Transverse colon (tissue), 4 donors: ENCODE measurements at regions of chr4 and their contacts with region 1.

Region 1: GRCh38 chr4:116202524-116202923 is 882.9 kb downstream of the TRAM1L1 start:
- DNase-seq: no peak
- H3K4me3 ChIP-seq: no peak overlapping the region
- H3K27ac ChIP-seq: no peak overlapping the region
- H3K4me1 ChIP-seq: no peaks in the 10 kb centered on the region
- H3K27me3 ChIP-seq: no peaks in the 10 kb centered on the region
- CTCF ChIP-seq: no peak
- EP300 ChIP-seq: no peak
- POLR2A ChIP-seq: no peak

Region 2: DNA sequence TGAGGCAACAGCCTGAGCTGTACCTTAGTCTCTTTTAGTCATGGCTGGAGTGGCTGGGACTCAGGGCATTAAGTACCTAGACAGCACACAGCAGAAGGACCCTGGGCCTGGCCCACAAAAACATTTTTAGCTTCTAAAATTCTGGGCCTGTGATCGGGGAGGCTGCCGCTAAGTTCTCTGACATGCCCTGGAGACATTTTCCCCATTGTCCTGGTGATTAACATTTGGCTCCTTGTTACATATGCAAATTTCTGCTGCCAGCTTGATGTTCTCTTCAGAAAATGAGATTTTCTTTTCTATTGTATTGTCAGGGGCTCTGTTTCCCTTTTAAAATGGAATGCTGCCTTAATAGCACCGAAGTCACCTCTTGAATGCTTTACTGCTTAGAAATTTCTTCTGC is 69.6 kb before region 1 on chr4:
- in situ Hi-C with region 1: no loop called
- intact Hi-C with region 1: no loop called
- DNase-seq: no peak
- H3K4me3 ChIP-seq: no peak overlapping the region
- H3K27ac ChIP-seq: no peak overlapping the region
- H3K4me1 ChIP-seq: no peaks in the 10 kb centered on the region
- H3K27me3 ChIP-seq: no peaks in the 10 kb centered on the region
- CTCF ChIP-seq: no peak
- EP300 ChIP-seq: no peak
- POLR2A ChIP-seq: no peak

Region 3: DNA sequence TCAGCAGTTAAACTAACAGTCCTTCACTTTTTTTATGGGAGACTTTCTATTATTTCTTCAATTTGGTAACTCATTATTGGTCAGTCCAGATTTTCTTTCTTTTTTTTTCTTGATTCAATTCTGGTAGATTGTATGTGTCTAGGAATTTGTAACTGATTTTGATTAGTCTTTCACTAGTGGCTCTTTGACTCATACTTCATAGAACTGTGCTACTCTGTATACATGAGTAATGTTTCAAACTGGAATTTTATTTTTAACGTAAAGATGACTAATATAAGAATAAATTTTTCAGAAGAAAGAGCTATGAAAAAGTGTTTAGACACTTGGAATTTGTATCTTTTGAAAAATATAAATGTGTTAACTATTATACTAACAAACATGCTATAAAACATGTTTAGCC is 69.8 kb after region 1 on chr4:
- in situ Hi-C with region 1: loop called in 1 of 4 experiments (anchors 10 kb)
- intact Hi-C with region 1: no loop called
- DNase-seq: no peak
- H3K4me3 ChIP-seq: no peak overlapping the region
- H3K27ac ChIP-seq: no peak overlapping the region
- H3K4me1 ChIP-seq: no peaks in the 10 kb centered on the region
- H3K27me3 ChIP-seq: no peaks in the 10 kb centered on the region
- CTCF ChIP-seq: no peak
- EP300 ChIP-seq: no peak
- POLR2A ChIP-seq: no peak

Region 4: DNA sequence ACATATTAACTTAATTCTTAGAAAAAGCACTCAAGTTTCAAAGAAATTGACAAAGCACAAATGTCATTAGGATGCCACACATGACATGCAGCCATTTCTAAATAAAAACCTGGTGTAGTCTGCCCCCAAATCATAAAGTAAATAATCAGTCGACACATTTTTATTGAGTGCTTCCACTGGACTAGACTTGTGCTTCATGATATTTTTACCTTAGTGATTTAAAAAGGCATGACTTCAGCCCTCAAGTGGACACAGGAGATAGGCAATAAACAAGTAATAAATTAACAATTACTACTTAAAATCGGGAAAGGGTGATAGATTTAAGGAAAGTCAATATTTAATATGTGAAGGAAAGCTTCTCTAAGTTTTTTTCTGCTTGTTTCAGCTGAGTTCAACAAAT is 875.2 kb after region 1 on chr4:
- in situ Hi-C with region 1: no loop called
- intact Hi-C with region 1: no loop called
- DNase-seq: no peak
- H3K4me3 ChIP-seq: no peak overlapping the region
- H3K27ac ChIP-seq: no peak overlapping the region
- H3K4me1 ChIP-seq: no peaks in the 10 kb centered on the region
- H3K27me3 ChIP-seq: no peaks in the 10 kb centered on the region
- CTCF ChIP-seq: no peak
- EP300 ChIP-seq: no peak
- POLR2A ChIP-seq: no peak